Endothelial cell of umbilical vein (primary cell): ENCODE measurements at regions of chr18 and their contacts with region 1.

Region 1: DNA sequence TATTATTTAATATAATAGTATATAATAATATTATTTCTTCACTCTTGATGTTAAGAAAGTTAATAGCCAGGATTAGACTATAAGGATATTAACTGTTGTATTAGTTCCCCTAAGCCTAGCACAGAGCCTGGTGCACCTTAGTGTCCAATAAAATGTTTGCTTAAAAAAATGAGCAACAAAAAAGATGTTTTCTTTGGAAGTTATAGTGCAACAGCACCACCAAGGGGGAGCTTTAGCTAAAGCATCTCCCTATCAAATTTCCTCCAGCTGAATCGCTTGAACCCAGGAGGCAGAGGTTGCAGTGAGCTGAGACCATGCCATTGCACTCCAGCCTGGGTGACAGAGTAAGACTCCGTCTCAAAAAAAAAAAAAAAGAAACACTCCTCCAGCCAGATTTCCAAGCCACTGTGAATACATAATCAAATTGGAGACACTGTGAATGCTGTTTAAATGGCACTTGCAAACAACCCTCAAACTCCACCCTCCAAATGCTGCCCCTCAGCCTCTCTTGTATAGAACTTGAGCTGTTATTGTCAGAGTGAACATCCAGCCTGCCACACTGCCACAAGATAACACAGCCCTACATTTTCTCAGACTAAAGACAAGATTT is 221.9 kb downstream of the DYM start:
- DNase-seq: peak; percentile 53
- H3K4me3 ChIP-seq: no peak overlapping the region
- H3K27ac ChIP-seq: no peak overlapping the region
- H3K4me1 ChIP-seq: peaks cover 3% of the 10 kb centered on the region
- H3K27me3 ChIP-seq: no peaks in the 10 kb centered on the region
- CTCF ChIP-seq: peak; percentile 42 to 48
- POLR2A ChIP-seq: no peak

Region 2: GRCh38 chr18:48675352-48675761 is 563.2 kb before region 1 on chr18:
- CTCF ChIA-PET with region 1: interaction called, 56 read pairs
- POLR2A ChIA-PET with region 1: no interaction called
- dilution Hi-C with region 1: no loop called
- intact Hi-C with region 1: loop called (anchors 1 kb)
- DNase-seq: peak; percentile 82
- H3K4me3 ChIP-seq: no peak overlapping the region
- H3K27ac ChIP-seq: no peak overlapping the region
- H3K4me1 ChIP-seq: peaks cover 6% of the 10 kb centered on the region
- H3K27me3 ChIP-seq: no peaks in the 10 kb centered on the region
- CTCF ChIP-seq: peak; percentile 90 to 96
- POLR2A ChIP-seq: no peak

Region 3: DNA sequence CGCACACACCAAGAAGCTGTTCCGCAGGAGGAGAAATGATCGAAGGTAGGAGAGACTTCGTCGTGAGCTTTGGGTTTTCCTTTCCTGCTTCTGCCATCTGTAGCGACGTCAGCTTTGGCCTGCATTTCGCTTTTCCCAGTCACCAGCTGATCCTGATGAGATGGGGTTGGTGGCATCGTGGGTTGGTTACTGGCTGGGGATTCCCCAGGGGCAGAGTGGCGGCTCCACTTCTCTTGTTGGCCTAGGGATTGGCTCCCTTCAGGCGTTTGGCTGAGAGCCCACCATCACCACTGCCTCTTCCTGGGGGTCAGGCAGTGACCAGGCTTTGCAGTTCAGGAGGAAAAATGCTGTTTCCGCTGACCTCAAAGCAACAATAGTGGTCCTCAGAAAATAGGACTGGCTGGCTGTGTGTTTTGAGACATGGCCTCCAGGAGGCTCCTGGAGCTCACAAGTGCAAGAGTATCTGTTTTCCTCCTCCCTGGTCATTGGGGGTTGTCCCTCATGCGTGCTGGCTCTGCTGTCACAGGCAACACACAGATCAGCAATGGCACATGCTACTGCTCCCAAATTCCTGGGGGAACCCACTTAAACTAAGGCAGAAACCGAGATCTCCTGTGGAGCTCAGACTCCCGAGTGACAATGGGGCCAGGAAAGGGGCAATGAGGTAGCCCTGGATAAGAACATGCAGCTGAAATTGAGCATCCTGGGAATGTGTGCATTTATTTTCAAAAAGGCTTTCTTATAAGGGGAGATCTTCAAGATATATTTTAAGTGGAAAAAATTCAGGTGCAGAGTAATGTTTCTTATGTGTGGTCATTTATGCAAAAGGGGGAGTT is 526.7 kb before region 1 on chr18:
- CTCF ChIA-PET with region 1: interaction called, 43 read pairs
- POLR2A ChIA-PET with region 1: no interaction called
- dilution Hi-C with region 1: no loop called
- intact Hi-C with region 1: loop called (anchors 1 kb)
- DNase-seq: peak; percentile 51
- H3K4me3 ChIP-seq: no peak overlapping the region
- H3K27ac ChIP-seq: no peak overlapping the region
- H3K4me1 ChIP-seq: peaks cover 35% of the 10 kb centered on the region
- H3K27me3 ChIP-seq: no peaks in the 10 kb centered on the region
- CTCF ChIP-seq: peak; percentile 45 to 56
- POLR2A ChIP-seq: no peak

Region 4: DNA sequence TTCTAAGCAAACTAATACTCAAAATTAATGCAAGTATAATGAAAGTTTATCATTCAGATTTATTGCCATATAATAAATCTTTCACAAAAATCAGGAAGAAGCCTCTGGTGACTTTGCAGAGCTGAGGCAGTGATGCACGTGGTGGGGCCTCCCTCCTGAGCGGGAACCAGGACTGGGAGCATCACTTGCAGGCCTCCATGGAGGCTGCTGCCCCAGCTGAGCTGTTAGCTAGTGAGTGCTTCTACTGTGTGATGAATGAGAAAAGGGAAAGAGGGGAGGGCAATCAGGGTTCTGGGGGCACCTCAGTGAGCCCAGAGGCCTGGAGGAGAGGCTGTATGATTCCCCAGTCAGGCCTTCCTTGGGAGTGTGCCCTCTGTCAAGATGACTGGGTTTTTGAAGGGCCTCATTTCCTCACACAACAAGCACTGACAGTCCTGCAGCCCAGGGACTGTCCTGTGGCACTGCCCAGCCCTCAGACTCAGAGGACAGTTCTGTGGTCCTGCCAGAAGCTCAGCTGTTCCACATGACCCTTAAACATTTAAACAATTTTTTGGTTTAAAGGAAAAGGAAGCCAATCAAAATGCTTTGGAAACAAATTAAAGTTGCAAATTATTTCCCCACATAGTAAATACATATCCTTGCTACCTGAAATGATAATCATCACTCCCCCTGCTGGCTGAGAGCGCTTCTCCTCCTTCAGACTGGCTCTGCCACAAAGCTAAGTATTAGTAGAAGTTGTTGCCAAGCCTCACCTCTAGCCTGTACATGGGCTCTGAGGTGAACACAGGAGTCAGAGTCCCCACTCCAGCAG is 196.9 kb before region 1 on chr18:
- CTCF ChIA-PET with region 1: interaction called, 27 read pairs
- POLR2A ChIA-PET with region 1: no interaction called
- dilution Hi-C with region 1: no loop called
- intact Hi-C with region 1: loop called (anchors 10 kb)
- DNase-seq: peak; percentile 52
- H3K4me3 ChIP-seq: no peak overlapping the region
- H3K27ac ChIP-seq: no peak overlapping the region
- H3K4me1 ChIP-seq: no peaks in the 10 kb centered on the region
- H3K27me3 ChIP-seq: no peaks in the 10 kb centered on the region
- CTCF ChIP-seq: peak; percentile 45 to 53
- POLR2A ChIP-seq: no peak

Region 5: DNA sequence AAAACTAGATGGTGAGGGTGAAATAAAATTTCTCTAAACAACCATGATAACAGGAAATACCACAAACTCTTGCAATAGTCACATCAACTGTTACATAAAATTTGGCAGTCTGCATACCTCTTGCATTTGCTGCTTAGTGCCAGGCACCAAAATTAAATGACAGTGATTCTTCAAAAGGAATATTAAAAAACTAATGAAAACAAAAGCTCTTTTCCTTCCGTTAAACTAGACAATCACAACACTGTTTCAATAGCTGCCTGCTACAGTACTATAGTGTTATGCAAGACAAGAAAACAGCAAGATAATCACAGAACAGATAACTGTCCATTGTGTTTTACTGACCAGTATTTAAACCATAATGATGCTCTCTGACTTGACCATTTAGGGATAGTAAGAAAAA is 48.8 kb before region 1 on chr18:
- CTCF ChIA-PET with region 1: interaction called, 6 read pairs
- POLR2A ChIA-PET with region 1: no interaction called
- dilution Hi-C with region 1: no loop called
- intact Hi-C with region 1: loop called (anchors 10 kb)
- DNase-seq: no peak
- H3K4me3 ChIP-seq: no peak overlapping the region
- H3K27ac ChIP-seq: no peak overlapping the region
- H3K4me1 ChIP-seq: peaks cover 7% of the 10 kb centered on the region
- H3K27me3 ChIP-seq: no peaks in the 10 kb centered on the region
- CTCF ChIP-seq: no peak
- POLR2A ChIP-seq: no peak

Region 6: GRCh38 chr18:49250816-49251388 is 12.4 kb after region 1 on chr18:
- CTCF ChIA-PET with region 1: interaction called, 17 read pairs
- POLR2A ChIA-PET with region 1: no interaction called
- dilution Hi-C with region 1: no loop called
- intact Hi-C with region 1: no loop called
- DNase-seq: peak; percentile 47
- H3K4me3 ChIP-seq: no peak overlapping the region
- H3K27ac ChIP-seq: no peak overlapping the region
- H3K4me1 ChIP-seq: peaks cover 38% of the 10 kb centered on the region
- H3K27me3 ChIP-seq: no peaks in the 10 kb centered on the region
- CTCF ChIP-seq: peak; percentile 32 to 52
- POLR2A ChIP-seq: no peak

Region 7: DNA sequence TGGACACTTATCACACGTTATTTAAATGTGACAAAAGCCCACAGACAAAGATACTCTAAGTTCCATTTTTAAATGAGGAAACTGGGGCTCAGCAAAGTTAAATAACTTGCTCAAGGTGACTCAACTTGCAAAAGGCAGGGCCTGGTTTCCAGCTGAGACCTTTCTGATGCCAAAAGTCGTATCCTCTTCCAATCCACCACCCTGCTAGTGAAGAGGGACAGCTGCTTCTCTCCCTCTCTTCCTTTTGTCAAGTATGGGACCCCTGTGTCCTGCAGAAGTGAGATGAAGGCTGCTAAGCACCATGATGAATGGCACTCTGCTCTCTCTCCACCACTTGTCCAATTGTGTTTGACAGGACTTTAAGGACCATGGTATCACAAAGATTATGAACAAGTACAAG is 81.1 kb after region 1 on chr18:
- CTCF ChIA-PET with region 1: no interaction called
- POLR2A ChIA-PET with region 1: no interaction called
- dilution Hi-C with region 1: no loop called
- intact Hi-C with region 1: no loop called
- DNase-seq: no peak
- H3K4me3 ChIP-seq: no peak overlapping the region
- H3K27ac ChIP-seq: no peak overlapping the region
- H3K4me1 ChIP-seq: peaks cover 15% of the 10 kb centered on the region
- H3K27me3 ChIP-seq: no peaks in the 10 kb centered on the region
- CTCF ChIP-seq: no peak
- POLR2A ChIP-seq: no peak